Activated T-helper 1 cell treated with anti-CD3 and anti-CD28 coated beads, Interleukin-12 subunit alpha, Interleukin-12 subunit beta, Interleukin-2, Interleukin-4 antibody, amounts not matched to agents 30 ng/mL and 10 ng/mL and 1 ng/mL, durations not matched to agents 14 hours and 24 hours and 36 hours (primary cell): ENCODE measurements at regions of chr4 and their contacts with region 1.

Region 1: DNA sequence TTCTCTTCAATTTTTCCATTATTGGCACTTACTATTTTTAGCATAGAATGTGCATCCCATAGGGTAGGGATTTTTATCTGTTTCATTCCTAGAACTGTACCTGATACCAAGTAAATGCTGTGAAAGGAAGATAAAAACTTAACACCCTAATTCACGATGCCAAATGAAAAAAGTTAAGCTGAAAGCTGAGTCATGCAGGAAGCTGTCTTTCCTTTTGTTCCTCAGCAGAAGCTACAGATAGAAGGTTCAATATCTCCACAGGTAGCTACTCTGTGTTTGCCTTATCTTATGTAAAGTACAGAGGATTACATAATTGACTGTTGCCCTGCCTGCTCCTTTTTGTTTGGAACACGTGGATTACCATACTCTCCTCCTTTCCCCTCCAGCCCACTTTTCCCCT is 77.0 kb downstream of the LRP2BP start:
- DNase-seq: no peak
- H3K4me3 Mint-ChIP-seq: peak overlapping the region; percentile 25
- H3K27ac Mint-ChIP-seq: peak overlapping the region; percentile 55
- H3K4me1 Mint-ChIP-seq: peaks cover 9% of the 10 kb centered on the region
- H3K27me3 Mint-ChIP-seq: no peaks in the 10 kb centered on the region

Region 2: DNA sequence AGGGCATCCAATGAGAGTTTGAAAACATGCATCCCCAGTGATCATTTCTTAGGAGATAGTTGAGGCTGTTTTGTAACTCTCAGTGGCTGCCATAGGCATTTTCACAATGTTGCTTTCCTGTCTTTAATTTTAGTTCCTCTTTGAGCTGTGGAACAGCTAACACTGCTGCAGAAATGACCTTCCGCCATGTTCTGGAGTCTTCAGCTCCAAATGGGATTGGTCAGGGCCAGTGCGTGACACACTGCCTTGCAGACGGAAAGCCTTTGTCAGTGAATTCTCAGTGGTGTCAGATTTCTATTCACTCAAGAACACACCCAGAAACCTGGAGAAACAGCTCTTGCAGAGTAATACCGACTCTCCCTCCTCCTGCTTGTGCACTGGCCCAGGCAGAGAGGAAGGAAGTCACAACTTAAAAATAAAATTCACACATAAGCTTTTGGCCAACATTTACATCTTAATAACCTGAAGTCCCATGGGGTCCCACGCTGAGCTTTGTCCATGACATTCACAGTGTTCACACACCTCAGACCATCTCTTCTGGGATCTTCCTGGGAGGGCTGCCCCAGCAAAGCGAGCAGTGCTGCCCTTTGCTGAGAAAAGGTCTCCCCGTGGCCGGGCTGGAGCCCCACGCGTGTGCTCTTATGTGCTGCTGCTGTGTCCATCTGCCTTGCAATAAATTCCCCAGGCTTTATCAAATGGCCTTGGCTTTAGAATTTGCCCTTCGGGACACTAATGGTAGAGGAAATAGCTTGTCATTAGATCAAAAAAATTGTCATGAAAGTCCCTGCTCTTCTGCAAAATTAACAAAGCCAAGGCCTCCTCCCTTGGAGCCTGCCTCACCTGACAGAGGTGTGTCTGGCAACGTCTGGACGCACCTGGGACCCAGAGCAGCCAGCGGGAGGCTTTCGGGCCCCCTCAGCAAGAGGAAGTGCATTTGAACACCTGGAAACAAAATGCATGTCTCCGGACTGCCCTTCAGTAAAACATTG is 971.1 kb before region 1 on chr4:
- intact Hi-C with region 1: no loop called
- DNase-seq: no peak
- H3K4me3 Mint-ChIP-seq: no peak overlapping the region
- H3K27ac Mint-ChIP-seq: no peak overlapping the region
- H3K4me1 Mint-ChIP-seq: peaks cover 23% of the 10 kb centered on the region
- H3K27me3 Mint-ChIP-seq: no peaks in the 10 kb centered on the region

Region 3: DNA sequence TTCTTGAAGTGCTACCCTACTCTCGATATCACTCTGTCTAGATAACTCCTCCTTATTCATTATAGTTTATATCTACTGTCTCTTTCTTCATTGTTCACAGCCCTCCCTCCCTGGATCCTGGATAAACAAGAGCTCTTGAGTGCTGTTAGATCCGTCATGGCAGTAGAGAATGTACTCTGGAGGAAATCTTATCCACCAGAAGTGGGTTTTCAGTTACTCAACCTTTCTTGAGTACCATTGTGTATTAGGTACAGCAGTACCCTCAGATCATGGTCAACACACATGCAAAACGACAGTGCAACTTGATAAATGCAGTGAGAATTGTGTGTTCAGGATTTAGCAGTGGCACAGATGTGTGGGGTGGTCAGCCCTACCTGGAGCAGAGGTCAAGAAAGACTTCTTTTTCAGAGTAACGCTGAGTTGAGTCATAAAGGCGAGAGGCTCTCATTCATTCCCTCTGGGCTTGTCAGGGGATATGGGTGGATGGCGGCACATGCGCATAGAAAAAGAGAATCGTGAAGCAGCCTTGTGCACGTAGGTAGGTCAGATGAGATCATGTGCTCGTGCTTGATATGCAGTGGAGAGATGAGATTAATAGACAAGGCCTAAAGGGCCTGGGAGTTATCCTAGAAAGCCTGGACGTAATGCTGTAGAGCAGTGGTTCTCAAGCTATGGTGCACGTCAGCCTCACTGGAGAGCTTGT is 19.8 kb before region 1 on chr4:
- intact Hi-C with region 1: loop called (anchors 1 kb)
- DNase-seq: no peak
- H3K4me3 Mint-ChIP-seq: no peak overlapping the region
- H3K27ac Mint-ChIP-seq: no peak overlapping the region
- H3K4me1 Mint-ChIP-seq: no peaks in the 10 kb centered on the region
- H3K27me3 Mint-ChIP-seq: no peaks in the 10 kb centered on the region

Region 4: GRCh38 chr4:185500035-185500434 is 181.4 kb after region 1 on chr4:
- intact Hi-C with region 1: no loop called
- DNase-seq: no peak
- H3K4me3 Mint-ChIP-seq: no peak overlapping the region
- H3K27ac Mint-ChIP-seq: no peak overlapping the region
- H3K4me1 Mint-ChIP-seq: no peaks in the 10 kb centered on the region
- H3K27me3 Mint-ChIP-seq: peaks cover 6% of the 10 kb centered on the region

Region 5: DNA sequence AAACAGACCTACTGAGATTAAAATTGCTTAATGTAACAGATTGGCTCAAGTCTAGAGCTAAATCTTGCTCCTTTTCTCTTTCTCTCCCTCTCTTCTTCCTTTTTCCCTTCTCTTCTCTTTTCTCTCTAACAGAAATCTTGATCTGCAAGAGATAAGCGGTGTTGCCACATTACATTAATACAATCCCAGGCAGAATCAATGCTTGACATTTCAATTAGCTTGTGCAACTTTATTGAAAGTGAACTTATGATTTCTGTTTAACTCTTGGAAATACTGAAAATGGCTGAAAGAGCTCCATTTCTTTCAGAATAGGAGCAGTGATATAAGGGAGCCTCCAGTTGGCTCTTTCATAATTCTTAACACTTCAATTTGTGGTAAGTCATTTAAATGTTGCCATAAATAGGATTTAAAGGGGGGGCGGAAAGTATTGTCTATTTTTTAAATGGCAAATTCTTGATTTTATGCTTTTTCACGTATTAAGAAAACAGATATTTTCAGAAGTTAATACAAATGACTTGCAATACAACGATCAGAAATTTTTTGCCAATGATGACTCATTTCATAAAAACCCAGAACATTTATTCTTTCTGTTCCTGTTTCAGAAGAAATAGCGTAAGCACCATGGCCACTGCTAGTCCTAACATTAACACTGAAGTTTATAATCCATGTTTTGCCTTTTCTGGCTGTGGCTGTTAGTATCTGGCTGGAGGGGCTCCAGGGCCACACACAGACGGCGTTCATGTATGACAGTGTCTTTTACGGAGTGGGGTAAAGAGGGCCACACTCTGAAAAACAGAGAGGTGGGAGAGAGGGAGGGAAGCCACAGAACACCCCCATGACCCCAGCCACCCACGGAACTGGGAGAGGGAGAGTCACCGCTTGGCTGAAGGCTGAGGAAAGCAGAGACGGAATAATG is 1520.7 kb after region 1 on chr4:
- intact Hi-C with region 1: no loop called
- DNase-seq: no peak
- H3K4me3 Mint-ChIP-seq: no peak overlapping the region
- H3K27ac Mint-ChIP-seq: no peak overlapping the region
- H3K4me1 Mint-ChIP-seq: no peaks in the 10 kb centered on the region
- H3K27me3 Mint-ChIP-seq: no peaks in the 10 kb centered on the region